Left cardiac atrium (tissue), 4 donors: ENCODE measurements at regions of chr17 and their contacts with region 1.

Region 1: GRCh38 chr17:44775136-44775837 is 16.5 kb downstream of the ADAM11 start:
- DNase-seq: peak; percentile 96
- ATAC-seq: peak; percentile 93 to 96

Region 2: DNA sequence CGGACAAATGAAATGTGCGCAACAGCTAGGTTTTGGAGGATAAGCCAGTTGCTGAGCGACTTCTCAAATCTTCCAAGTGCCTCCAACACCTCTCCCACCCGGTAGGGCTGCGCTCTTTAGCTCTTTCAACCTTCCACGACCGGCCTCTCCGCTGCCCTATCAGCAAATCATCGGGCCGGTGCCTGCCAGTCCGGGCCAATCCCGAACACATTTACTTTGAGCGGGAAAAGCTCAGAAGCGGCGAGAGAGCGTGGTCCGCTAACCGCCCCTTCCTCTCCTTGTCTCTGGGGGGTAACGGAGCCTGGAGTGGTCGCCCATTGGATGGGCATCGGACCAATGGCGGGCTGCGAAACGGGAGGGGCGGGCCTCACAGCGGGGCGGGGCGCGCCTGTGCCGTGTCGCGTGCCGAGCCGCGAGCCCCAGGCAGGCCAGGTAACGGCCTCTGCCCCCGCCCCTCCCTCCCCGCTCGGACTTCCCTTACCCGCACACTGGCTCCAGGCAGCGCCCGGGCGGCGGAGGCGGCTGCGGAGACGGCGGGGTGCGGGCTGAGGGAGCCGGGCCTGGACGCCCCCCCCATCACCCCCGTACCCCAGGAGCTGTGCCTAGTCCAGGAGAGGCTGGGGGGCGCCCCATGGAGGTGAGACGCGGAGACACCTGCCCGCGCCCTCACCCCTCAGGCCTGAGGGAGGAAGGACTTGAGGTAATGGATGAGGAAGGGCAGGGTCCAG is 119.1 kb before region 1 on chr17 and contains the start of gene MEIOC:
- intact Hi-C with region 1: no loop called
- DNase-seq: no peak
- ATAC-seq: peak; percentile 30 to 55
- total RNA-seq, gene MEIOC: 0.10 TPM in 1 of 2 donors, not detected in the other

Region 3: DNA sequence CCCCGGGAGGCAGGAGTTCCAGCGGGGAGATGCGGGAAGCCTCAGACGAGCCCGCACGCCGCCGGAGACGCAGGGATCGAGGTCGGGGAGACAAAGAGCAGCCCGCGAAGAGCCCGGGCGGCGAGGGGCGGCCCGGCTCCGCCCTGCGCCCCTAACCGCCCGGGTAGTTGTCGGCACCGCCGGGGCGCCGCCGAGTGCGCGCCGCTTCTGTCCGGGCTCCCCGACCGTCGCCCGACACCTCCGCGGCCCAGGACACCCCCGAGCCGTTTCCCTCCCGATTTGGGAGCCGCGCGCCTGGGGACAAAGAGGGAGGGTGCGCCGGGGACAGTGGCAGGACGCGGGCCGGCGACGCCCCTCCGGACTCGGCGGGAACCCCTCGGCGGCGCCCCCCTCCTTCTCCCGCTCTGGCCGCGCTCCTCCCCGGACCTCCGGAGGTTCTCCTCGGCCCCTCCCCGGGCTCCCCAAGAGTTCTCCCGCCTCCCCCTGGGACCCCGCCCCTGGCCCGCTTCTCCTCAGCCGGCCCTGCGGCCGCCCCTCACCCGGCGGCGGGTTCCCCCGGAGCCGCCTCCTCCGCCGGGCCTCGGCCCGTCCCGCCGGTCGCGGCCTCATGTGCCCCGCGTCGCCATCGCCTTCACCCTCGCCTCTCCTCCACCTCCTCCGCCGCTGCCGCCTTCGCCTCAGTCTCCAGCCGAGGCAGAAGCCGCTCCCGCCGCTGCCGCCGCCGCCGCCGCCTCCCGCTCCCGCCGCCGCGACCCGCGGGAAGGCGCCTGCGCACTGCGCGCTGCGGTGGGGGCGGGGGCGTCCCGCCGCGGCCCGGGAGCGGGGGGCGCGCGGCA is 54.5 kb after region 1 on chr17 and contains the start of gene GJC1:
- intact Hi-C with region 1: loop called in 1 of 2 experiments (anchors 5 kb)
- DNase-seq: peak; percentile 46
- ATAC-seq: peak; percentile 74 to 80
- total RNA-seq, gene GJC1: 28.5 to 38.5 TPM

Region 4: GRCh38 chr17:44864866-44865660 is 89.8 kb after region 1 on chr17:
- intact Hi-C with region 1: loop called (anchors 1 to 5 kb)
- DNase-seq: peak; percentile 55
- ATAC-seq: peak; percentile 75 to 79

Region 5: GRCh38 chr17:44872131-44872768 is 97.0 kb after region 1 on chr17:
- intact Hi-C with region 1: loop called in 1 of 2 experiments (anchors 5 kb)
- DNase-seq: peak; percentile 58
- ATAC-seq: peak; percentile 90 to 93

Region 6: DNA sequence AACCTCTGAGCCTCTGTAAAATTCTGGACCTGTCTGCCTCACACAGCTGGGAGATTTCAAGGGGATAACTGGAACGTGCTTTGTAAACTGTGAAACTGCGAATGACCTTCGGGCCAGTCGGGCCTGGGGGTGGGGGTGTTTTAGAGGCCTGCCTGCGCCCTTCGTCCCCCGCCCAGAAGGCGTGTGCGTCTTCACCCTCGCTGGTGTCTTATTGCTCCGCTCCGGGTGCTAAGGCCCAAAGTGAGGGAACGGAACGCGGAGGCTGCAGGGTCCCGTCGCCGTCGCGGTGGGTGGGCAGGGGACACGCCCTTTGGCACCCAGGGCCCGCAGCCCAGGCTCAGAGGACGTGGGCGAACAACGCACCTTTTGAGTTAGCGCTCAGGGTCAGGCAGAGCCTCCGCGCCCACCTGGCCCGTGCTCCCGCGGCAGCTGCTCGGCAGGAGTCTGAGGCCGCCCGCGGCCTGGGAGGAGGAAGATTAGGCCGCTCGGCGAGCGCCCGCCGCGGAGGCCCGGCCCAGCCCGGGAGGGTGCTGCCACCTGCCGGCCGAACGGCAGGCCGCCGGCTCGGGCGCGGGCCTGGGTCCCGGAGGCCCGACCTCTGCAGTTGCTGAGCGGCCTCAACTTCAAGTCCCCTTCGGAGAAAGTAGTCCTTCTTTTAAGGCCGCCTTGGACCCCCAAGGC is 246.5 kb after region 1 on chr17:
- intact Hi-C with region 1: loop called in 1 of 2 experiments (anchors 1 kb)
- DNase-seq: peak; percentile 76
- ATAC-seq: peak; percentile 81